Activated naive CD4-positive, alpha-beta T cell treated with anti-CD3 and anti-CD28 coated beads for 36 hours (primary cell): ENCODE measurements at regions of chr2 and their contacts with region 1.

Region 1: GRCh38 chr2:208265801-208266552 is at the start of gene PIKFYVE:
- DNase-seq: peak; percentile 94
- H3K4me3 Mint-ChIP-seq: peak within 1 kb of the TSS; percentile 95
- H3K27ac Mint-ChIP-seq: peak within 1 kb of the TSS; percentile 94
- H3K4me1 Mint-ChIP-seq: peaks cover 33% of the 10 kb centered on the region
- H3K27me3 Mint-ChIP-seq: no peaks in the 10 kb centered on the region
- total RNA-seq, gene PIKFYVE: 20.2 to 22.4 TPM

Region 2: GRCh38 chr2:207782238-207783030 is 483.5 kb before region 1 on chr2:
- CTCF ChIA-PET with region 1: no interaction called
- intact Hi-C with region 1: no loop called
- DNase-seq: no peak
- H3K4me3 Mint-ChIP-seq: no peak overlapping the region
- H3K27ac Mint-ChIP-seq: no peak overlapping the region
- H3K4me1 Mint-ChIP-seq: no peaks in the 10 kb centered on the region
- H3K27me3 Mint-ChIP-seq: no peaks in the 10 kb centered on the region

Region 3: DNA sequence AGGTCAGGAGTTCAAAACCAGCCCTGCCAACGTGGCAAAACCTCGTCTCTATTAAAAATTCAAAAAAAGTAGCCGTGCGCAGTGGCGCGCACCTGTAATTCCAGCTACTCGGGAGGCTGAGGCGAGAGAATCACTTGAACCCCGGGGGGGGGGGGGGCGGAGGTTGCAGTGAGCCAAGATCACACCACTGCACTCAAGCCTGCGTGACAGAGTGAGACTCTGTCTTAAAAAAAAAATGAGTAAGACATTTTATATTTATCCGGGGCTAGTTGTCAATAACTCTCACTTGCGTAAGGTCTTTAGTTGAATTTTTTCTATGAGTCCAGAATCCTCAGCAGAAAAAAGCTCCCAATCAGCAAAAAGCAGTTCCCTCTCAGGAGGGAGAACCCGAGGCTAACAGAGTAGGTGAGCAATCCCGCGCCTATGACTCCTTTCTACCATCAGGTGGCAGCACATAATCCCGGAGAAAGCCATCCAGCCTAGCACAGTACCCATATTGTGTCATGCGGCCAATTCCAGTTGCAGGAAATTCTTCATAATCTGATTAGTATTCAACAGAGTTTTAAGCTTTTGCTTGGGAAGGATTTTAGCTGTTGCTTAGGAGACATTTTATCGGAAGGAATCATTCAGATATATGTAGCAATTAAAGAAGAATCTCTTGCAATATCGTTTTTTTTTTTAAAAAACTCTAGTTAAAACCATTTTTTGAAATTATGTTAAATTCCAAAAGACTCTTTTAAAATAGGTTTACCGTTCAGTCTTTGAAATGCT is 90.7 kb before region 1 on chr2:
- CTCF ChIA-PET with region 1: interaction called, 12 read pairs
- intact Hi-C with region 1: loop called (anchors 1 kb)
- DNase-seq: peak; percentile 80
- H3K4me3 Mint-ChIP-seq: no peak overlapping the region
- H3K27ac Mint-ChIP-seq: no peak overlapping the region
- H3K4me1 Mint-ChIP-seq: peaks cover 2% of the 10 kb centered on the region
- H3K27me3 Mint-ChIP-seq: peaks cover 11% of the 10 kb centered on the region

Region 4: DNA sequence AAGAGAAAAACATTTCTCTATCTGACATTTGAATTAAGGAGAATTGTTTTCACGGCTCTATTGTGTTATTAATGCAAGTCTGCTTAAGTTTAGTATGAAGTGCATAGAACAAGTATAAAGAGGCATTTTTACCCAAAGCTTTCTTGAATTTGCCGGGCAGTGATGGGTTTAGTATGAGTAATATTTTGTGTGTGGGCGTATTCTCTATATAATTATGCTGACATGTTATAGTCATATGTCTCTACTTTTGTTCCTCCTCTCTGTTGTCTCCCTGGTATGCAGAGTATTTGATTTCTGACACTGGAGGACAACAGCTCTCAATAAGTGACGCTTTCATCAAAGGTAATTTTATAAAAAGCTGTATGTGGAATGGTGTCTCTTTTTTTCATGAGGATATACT is 46.0 kb after region 1 on chr2:
- CTCF ChIA-PET with region 1: interaction called, 3 read pairs
- intact Hi-C with region 1: loop called (anchors 2 kb)
- DNase-seq: no peak
- H3K4me3 Mint-ChIP-seq: no peak overlapping the region
- H3K27ac Mint-ChIP-seq: no peak overlapping the region
- H3K4me1 Mint-ChIP-seq: peaks cover 15% of the 10 kb centered on the region
- H3K27me3 Mint-ChIP-seq: no peaks in the 10 kb centered on the region

Region 5: GRCh38 chr2:208570851-208571764 is 305.1 kb after region 1 on chr2:
- CTCF ChIA-PET with region 1: no interaction called
- intact Hi-C with region 1: no loop called
- DNase-seq: no peak
- H3K4me3 Mint-ChIP-seq: no peak overlapping the region
- H3K27ac Mint-ChIP-seq: no peak overlapping the region
- H3K4me1 Mint-ChIP-seq: no peaks in the 10 kb centered on the region
- H3K27me3 Mint-ChIP-seq: no peaks in the 10 kb centered on the region

Region 6: GRCh38 chr2:208798710-208799109 is 532.7 kb after region 1 on chr2:
- CTCF ChIA-PET with region 1: no interaction called
- intact Hi-C with region 1: no loop called
- DNase-seq: no peak
- H3K4me3 Mint-ChIP-seq: no peak overlapping the region
- H3K27ac Mint-ChIP-seq: no peak overlapping the region
- H3K4me1 Mint-ChIP-seq: no peaks in the 10 kb centered on the region
- H3K27me3 Mint-ChIP-seq: no peaks in the 10 kb centered on the region

Region 7: GRCh38 chr2:210002158-210003157 is 1736.5 kb after region 1 on chr2 and contains the start of gene RPE:
- CTCF ChIA-PET with region 1: no interaction called
- intact Hi-C with region 1: loop called (anchors 5 kb)
- DNase-seq: peak; percentile 98
- H3K4me3 Mint-ChIP-seq: peak within 1 kb of the TSS; percentile 93
- H3K27ac Mint-ChIP-seq: peak within 1 kb of the TSS; percentile 94
- H3K4me1 Mint-ChIP-seq: peaks cover 52% of the 10 kb centered on the region
- H3K27me3 Mint-ChIP-seq: no peaks in the 10 kb centered on the region
- total RNA-seq, gene RPE: 43.9 to 46.2 TPM